ENCODE measurements at regions of chr20 and their contacts with region 1.

Region 1: DNA sequence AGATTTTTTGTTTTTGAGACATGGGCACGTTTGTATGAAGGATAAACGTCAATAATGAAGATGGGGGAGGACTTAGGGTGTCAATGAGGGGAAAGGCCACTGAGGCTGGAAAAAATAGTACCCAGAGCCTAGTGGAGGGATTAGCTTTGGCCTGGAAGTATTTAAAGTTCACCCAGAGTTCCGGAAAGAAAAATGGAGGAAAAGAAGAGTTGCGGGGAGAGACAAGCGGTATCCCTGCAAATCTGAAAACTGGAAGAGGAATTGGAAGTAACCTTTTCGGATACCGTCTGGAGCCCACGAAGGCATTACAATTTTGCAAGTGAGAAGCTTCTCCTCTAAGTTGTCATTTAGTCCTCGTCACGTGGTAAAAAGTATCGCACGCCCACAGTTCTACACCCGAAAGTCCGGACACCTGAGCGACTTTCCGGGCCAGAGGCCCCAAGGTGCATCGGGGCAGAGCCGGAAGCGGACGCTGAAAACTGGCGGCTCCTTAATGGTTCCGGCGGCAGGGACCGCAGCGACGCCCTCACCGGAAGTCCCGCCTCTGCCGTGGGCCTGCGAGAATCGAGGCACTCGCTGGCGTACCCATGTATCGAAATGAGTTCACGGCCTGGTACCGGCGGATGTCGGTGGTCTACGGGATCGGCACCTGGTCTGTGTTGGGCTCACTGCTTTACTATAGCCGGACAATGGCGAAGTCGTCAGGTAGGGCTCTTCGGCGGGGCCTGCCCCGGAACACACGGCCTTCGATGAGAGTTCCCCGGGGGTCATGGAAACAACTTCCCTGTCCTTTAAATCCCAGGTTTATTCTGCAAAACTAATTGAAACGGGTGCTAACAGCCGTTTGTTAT is at the start of gene SMIM26:
- DNase-seq: peak; percentile 82
- ATAC-seq: peak; percentile 98
- H3K4me3 ChIP-seq: peak within 1 kb of the TSS; percentile 97
- H3K27ac ChIP-seq: peak within 1 kb of the TSS; percentile 99
- H3K4me1 ChIP-seq: peaks cover 2% of the 10 kb centered on the region; the same call in 1 of the 2 replicates
- H3K27me3 ChIP-seq: no peaks in the 10 kb centered on the region
- CTCF ChIP-seq: no peak
- POLR2A ChIP-seq: peak; percentile 61; the same call in 1 of the 2 replicates
- RAD21 ChIP-seq: no peak
- total RNA-seq, gene SMIM26: 42.8 and 49.2 TPM in 2 replicates

Region 2: GRCh38 chr20:18587665-18588573 is 20.8 kb after region 1 on chr20 and contains the start of gene DTD1:
- CTCF ChIA-PET with region 1: no interaction called
- POLR2A ChIA-PET with region 1: interaction called, 10 read pairs
- dilution Hi-C with region 1: no loop called
- in situ Hi-C with region 1: no loop called
- intact Hi-C with region 1: no loop called
- DNase-seq: peak; percentile 81
- ATAC-seq: peak; percentile 97
- H3K4me3 ChIP-seq: peak within 1 kb of the TSS; percentile 75
- H3K27ac ChIP-seq: peak within 1 kb of the TSS; percentile 41
- H3K4me1 ChIP-seq: no peaks in the 10 kb centered on the region
- H3K27me3 ChIP-seq: no peaks in the 10 kb centered on the region
- CTCF ChIP-seq: peak; percentile 62
- POLR2A ChIP-seq: peak; percentile 50; the same call in 1 of the 2 replicates
- RAD21 ChIP-seq: no peak
- total RNA-seq, gene DTD1: 101 and 124 TPM in 2 replicates

Region 3: DNA sequence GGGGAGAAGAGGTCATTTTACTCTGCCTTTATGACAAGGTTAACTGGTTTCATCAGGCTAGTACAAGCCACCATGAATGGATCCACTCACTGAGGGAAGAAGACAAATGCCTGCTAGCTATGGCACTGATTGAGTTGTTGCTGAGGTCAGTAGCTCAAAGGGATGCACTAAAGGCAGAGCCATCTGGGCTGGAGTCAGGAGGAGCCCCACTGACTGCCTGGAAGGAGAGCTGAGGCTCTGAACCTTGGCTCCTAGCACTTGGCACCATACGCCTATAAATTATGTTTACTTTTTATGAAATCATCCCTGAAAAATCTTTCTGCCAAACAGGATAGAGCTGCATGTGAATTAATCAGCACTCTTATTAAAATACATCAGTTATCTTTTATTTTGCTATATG is 125.3 kb after region 1 on chr20:
- CTCF ChIA-PET with region 1: no interaction called
- POLR2A ChIA-PET with region 1: interaction called, 17 read pairs
- dilution Hi-C with region 1: no loop called
- in situ Hi-C with region 1: no loop called
- intact Hi-C with region 1: no loop called
- DNase-seq: peak; percentile 3
- ATAC-seq: peak; percentile 62
- H3K4me3 ChIP-seq: no peak overlapping the region
- H3K27ac ChIP-seq: no peak overlapping the region
- H3K4me1 ChIP-seq: no peaks in the 10 kb centered on the region
- H3K27me3 ChIP-seq: no peaks in the 10 kb centered on the region
- CTCF ChIP-seq: no peak
- POLR2A ChIP-seq: no peak
- RAD21 ChIP-seq: no peak

Region 4: DNA sequence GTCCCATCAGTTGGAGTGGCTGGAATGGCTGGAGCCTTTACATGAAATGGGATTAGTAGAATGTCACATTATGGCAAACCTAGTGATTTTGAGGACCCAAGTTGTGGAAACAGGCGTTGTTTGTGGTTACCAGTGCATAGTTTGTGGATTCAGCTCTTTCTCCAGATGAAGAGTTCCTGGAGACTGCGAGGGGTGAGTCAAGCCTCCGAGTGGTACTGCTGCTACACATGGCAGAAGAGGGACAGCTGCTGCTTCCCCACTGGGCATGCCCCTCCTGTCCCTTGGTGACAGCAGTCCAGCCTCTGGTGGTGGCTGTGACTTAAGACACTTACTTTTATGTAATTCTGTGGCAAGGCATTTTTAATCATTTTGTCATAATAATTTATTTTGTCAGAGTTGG is 152.3 kb after region 1 on chr20:
- CTCF ChIA-PET with region 1: no interaction called
- POLR2A ChIA-PET with region 1: no interaction called
- dilution Hi-C with region 1: no loop called
- in situ Hi-C with region 1: no loop called
- intact Hi-C with region 1: no loop called
- DNase-seq: peak; percentile 56
- ATAC-seq: peak; percentile 82
- H3K4me3 ChIP-seq: no peak overlapping the region
- H3K27ac ChIP-seq: no peak overlapping the region
- H3K4me1 ChIP-seq: peaks cover 2% of the 10 kb centered on the region; the same call in 1 of the 2 replicates
- H3K27me3 ChIP-seq: no peaks in the 10 kb centered on the region
- CTCF ChIP-seq: no peak
- POLR2A ChIP-seq: no peak
- RAD21 ChIP-seq: no peak

Measured in IMR-90 (cell line).